Activated CD8-positive, alpha-beta T cell treated with anti-CD3 and anti-CD28 coated beads for 36 hours (primary cell): ENCODE measurements at regions of chr11 and their contacts with region 1.

Region 1: GRCh38 chr11:83051760-83052671 is 19.7 kb downstream of the RAB30 start:
- DNase-seq: no peak
- ATAC-seq: peak; percentile 28
- H3K4me3 Mint-ChIP-seq: no peak overlapping the region
- H3K27ac Mint-ChIP-seq: no peak overlapping the region
- H3K4me1 Mint-ChIP-seq: peaks cover 64% of the 10 kb centered on the region
- H3K27me3 Mint-ChIP-seq: no peaks in the 10 kb centered on the region
- CTCF ChIP-seq: no peak

Region 2: DNA sequence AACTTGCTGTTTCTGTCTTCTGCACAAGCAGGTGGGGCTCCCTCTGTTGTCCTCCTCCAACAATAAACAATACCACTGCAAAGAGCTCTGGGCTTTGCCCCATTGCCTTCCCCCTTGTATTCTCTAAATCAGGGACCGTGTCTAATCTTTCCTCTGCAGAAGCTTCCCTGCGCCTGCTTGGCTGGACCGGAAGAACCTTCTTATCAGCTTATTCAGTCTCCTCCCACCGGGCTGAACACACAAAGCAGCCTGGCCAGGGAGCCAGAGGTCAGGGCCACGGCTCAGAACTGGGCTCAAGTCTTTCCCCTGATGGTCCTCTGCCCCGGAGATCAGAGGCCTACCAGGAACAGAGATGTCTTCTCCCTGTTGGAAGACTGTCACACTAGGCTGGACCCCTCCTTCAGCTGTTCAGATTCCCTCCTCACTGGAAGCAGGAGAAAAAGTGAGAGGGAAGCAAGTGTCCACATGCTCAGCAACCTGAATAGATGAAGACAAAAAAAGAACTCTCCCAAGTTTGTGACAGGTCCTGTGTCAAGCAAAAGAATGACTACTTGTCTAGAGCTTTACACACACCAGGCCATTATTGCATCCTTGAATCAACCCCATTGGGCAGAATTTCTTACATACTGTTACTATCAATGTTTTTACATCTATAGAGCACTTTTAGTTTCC is 44.0 kb before region 1 on chr11:
- CTCF ChIA-PET with region 1: no interaction called
- POLR2A ChIA-PET with region 1: interaction called, 3 read pairs
- intact Hi-C with region 1: loop called (anchors 10 kb)
- DNase-seq: peak; percentile 15
- ATAC-seq: no peak
- H3K4me3 Mint-ChIP-seq: no peak overlapping the region
- H3K27ac Mint-ChIP-seq: peak overlapping the region; percentile 48
- H3K4me1 Mint-ChIP-seq: peaks cover 67% of the 10 kb centered on the region
- H3K27me3 Mint-ChIP-seq: no peaks in the 10 kb centered on the region
- CTCF ChIP-seq: no peak